Aorta (tissue), 5 donors: ENCODE measurements at regions of chr15 and their contacts with region 1.

Region 1: DNA sequence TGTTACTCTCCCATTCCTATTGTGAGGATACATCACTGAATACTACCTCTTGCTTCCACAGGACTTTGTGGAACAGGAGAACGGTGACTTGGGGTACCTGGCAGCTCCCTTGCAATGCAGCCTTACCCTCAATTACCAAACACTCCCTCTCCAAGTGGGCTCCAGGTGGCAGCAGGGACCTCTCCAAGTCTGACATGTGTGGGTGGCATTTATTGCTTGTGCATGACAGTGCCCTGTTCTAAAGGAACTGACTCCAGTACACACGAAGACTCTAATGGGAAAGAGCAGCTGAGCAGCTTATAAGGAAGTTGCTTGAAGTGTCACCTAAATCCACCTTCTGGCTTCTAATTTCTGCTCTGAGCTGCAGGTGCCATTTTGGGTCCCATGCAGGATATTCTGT is 174.1 kb upstream of the SLCO3A1 start:
- DNase-seq: no peak
- ATAC-seq: no peak
- H3K4me3 ChIP-seq: no peak overlapping the region
- H3K27ac ChIP-seq: no peak overlapping the region
- H3K4me1 ChIP-seq: no peaks in the 10 kb centered on the region
- H3K27me3 ChIP-seq: no peaks in the 10 kb centered on the region

Region 2: DNA sequence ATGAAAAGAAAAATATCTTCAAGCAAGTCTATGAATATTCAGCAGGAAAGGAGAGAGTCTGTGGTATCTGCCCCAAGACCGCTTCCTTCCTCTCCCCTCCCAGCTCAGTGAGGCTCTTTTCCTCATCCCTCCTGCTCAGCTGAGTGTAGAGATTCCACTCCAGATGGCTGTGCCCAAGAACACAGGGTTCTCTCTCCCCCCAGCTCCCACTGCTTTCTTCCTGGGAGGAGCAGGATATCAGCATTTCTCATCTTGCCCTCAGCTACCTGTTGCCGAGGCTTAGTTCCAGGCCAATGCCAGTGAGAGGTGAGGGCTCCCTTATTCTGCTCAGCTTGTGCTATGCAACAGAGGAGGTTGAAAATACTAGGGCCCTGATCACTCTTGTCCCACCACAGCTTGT is 367.4 kb before region 1 on chr15:
- intact Hi-C with region 1: loop called in 1 of 2 experiments (anchors 10 kb)
- DNase-seq: no peak
- ATAC-seq: no peak
- H3K4me3 ChIP-seq: no peak overlapping the region
- H3K27ac ChIP-seq: no peak overlapping the region
- H3K4me1 ChIP-seq: no peaks in the 10 kb centered on the region
- H3K27me3 ChIP-seq: no peaks in the 10 kb centered on the region

Region 3: GRCh38 chr15:91508633-91509032 is 170.8 kb before region 1 on chr15:
- intact Hi-C with region 1: no loop called
- DNase-seq: no peak
- ATAC-seq: no peak
- H3K4me3 ChIP-seq: no peak overlapping the region
- H3K27ac ChIP-seq: no peak overlapping the region
- H3K4me1 ChIP-seq: no peaks in the 10 kb centered on the region
- H3K27me3 ChIP-seq: no peaks in the 10 kb centered on the region

Region 4: DNA sequence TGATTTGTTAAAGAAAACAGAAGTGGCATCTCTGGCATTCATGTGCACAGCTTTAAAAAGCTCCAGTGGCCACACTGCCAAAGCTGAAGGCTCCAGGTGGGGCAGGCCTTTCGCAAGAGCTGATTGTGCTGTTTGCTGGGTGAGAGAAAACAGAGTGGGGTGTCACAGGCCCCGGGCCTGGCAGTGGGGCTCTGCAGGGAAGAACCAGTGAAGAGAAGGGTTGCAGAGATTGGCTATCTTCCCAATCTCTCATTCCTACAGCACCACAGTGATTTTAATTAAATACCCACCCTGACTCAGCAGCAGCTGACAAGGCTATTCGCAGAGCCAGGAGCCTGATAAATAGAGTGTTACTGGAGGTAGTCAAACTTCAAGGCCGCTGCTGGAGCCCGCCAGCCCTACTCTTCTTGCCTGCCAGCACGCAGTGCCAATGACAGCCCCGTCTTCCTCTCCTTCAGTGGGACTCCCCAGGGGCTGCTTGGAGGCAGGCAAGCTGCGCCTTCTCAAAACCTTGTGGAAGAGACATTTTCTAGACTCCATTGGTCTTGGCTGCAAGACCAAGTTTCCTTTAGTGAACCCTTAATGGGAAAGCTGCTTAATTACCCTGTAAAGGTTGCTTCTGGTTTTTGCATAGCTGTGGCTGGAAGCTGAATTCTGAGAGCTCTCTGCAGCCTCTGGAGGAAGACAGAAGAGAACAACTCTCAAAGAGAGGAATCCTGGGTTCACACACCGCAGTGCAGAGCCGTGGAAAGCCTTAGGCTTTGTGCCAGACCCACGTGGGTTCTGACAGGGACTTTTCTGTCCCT is 51.8 kb before region 1 on chr15:
- intact Hi-C with region 1: no loop called
- DNase-seq: no peak
- ATAC-seq: no peak
- H3K4me3 ChIP-seq: no peak overlapping the region
- H3K27ac ChIP-seq: no peak overlapping the region
- H3K4me1 ChIP-seq: no peaks in the 10 kb centered on the region
- H3K27me3 ChIP-seq: no peaks in the 10 kb centered on the region